Dendritic cell treated with granulocyte-macrophage colony-stimulating factor and Interleukin-4, amounts not matched to agents 40 ng/mL and 50 ng/mL, for 4 days (primary cell): ENCODE measurements at regions of chr1 and their contacts with region 1.

Region 1: DNA sequence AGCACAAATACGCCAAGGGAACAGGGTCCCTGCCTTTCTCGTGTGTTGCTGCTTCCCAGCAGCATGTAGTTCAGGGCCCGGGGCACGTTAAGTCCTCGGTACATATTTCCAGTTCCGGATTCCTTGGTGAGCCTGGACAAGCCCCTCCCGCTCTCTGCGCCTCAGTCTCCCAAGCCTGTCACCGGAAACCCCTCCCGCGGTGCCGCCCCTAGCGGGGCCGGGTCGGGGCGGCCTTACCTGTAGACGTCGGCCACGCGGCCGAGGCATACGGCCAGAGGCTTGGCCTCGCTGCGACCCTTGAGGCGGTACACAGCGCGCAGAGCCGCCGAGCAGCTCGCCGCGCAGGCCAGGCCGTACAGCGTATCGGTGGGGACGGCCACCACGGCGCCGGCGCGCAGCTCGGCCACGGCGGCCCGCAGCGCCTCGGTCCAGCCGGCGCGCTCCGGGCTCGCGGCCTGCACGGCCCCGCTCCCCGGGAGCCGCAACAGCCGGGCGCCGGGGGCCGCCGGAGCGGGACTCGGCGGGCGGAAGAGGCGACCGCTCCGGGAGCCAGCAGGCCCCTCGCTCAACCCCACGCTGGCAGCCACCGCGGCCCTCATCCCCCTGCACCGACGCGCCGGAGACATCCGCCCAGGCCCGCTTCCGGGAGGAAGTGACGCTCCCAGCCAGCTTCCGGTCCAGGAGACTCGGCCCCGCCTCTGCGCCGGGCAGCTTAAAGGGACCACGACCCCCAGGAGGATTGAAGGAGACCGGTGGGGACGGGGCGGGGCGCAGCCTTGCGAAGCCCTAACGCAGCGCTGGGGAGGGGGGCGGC is at the starts of genes C1orf122 and YRDC:
- H3K4me3 Mint-ChIP-seq: peak within 1 kb of the TSS; percentile 85
- H3K27ac Mint-ChIP-seq: peak within 1 kb of the TSS; percentile 94
- H3K4me1 Mint-ChIP-seq: peaks cover 44% of the 10 kb centered on the region
- H3K27me3 Mint-ChIP-seq: no peaks in the 10 kb centered on the region

Region 2: GRCh38 chr1:37595440-37596319 is 212.1 kb before region 1 on chr1 and contains the start of gene GNL2:
- intact Hi-C with region 1: loop called (anchors 5 kb)
- H3K4me3 Mint-ChIP-seq: peak within 1 kb of the TSS; percentile 98
- H3K27ac Mint-ChIP-seq: peak within 1 kb of the TSS; percentile 95
- H3K4me1 Mint-ChIP-seq: peaks cover 5% of the 10 kb centered on the region
- H3K27me3 Mint-ChIP-seq: peaks cover 4% of the 10 kb centered on the region

Region 3: GRCh38 chr1:37859507-37860345 is 52.0 kb after region 1 on chr1 and contains the start of gene MTF1:
- intact Hi-C with region 1: loop called (anchors 2 kb)
- H3K4me3 Mint-ChIP-seq: peak within 1 kb of the TSS; percentile 94
- H3K27ac Mint-ChIP-seq: peak within 1 kb of the TSS; percentile 97
- H3K4me1 Mint-ChIP-seq: peaks cover 30% of the 10 kb centered on the region
- H3K27me3 Mint-ChIP-seq: no peaks in the 10 kb centered on the region

Region 4: GRCh38 chr1:37995751-37996345 is 188.1 kb after region 1 on chr1:
- intact Hi-C with region 1: loop called (anchors 10 kb)
- H3K4me3 Mint-ChIP-seq: peak overlapping the region; percentile 69
- H3K27ac Mint-ChIP-seq: peak overlapping the region; percentile 91
- H3K4me1 Mint-ChIP-seq: peaks cover 67% of the 10 kb centered on the region
- H3K27me3 Mint-ChIP-seq: no peaks in the 10 kb centered on the region